K562 (cell line): ENCODE measurements at regions of chr14 and their contacts with region 1.

Region 1: DNA sequence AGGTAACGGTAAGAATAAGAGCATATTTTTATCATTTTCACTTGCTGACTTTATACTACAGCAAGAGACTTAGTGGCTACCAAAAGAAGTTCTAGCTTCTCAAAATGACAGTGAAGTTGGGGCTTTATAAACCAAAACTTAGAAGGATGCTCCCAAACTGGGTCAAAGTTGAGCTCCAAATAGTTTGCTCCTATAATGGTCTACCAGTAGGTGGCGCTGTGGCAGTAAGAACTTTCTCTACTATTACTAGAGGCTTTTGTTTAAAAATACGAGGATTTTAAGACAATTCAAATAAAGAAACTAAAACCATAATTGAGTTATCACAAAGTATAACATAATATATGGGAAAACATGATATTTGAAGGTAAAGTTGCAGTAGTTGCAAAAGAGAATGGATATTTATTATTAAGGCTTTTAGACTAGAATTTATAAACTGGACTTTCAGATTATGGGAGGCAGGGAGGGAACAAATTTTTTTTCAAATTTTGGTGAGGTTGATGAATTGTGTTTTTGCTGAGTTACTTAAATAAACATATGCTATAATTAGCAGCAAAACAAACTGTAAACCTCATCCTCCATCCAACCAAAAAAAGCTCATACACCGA is 75.0 kb downstream of the TGFB3 start:
- DNase-seq: peak; percentile 45 to 73 (median 50)
- ATAC-seq: peak; percentile 70; the same call in 2 of the 3 replicates
- H3K4me3 ChIP-seq: no peak overlapping the region
- H3K27ac ChIP-seq: no peak overlapping the region
- H3K4me1 ChIP-seq: peaks cover 2 to 6% of the 10 kb centered on the region in 2 experiments; a peak in 2 of 5 replicates
- H3K27me3 ChIP-seq: no peaks in the 10 kb centered on the region
- CTCF ChIP-seq: peak; percentile 48 to 69 (median 65); a peak in 5 of 6 replicates
- EP300 ChIP-seq: no peak
- POLR2A ChIP-seq: no peak
- RAD21 ChIP-seq: peak; percentile 58 to 73

Region 2: DNA sequence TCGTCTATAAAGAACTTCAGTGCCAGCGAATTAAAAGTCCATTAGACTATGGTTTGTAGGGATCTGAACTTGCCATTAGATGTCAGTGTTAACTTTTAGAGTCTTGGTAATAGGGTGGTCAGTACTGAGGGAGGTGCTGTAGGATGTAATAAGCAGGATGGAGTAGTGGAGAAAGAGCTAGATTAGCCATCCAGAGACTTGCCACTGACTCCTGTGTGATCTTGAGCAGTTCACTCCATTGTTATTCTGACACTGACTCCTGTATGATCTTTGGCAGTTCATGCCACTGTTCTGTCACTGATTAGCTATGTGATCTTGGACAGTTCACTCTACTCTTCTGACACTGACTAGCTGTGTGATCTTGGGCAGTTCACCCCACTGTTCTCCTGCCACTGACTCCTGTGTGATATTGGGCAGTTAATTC is 112.2 kb before region 1 on chr14:
- CTCF ChIA-PET with region 1: no interaction called
- POLR2A ChIA-PET with region 1: no interaction called
- in situ Hi-C with region 1: no loop called
- intact Hi-C with region 1: loop called (anchors 2 kb)
- DNase-seq: peak in 1 of 4 experiments; percentile 11
- ATAC-seq: peak; percentile 83
- H3K4me3 ChIP-seq: no peak overlapping the region
- H3K27ac ChIP-seq: no peak overlapping the region
- H3K4me1 ChIP-seq: no peaks in the 10 kb centered on the region
- H3K27me3 ChIP-seq: no peaks in the 10 kb centered on the region
- CTCF ChIP-seq: peak; percentile 29 to 71 (median 68); a peak in 4 of 6 replicates
- EP300 ChIP-seq: no peak
- POLR2A ChIP-seq: no peak
- RAD21 ChIP-seq: peak; percentile 56 to 72

Region 3: DNA sequence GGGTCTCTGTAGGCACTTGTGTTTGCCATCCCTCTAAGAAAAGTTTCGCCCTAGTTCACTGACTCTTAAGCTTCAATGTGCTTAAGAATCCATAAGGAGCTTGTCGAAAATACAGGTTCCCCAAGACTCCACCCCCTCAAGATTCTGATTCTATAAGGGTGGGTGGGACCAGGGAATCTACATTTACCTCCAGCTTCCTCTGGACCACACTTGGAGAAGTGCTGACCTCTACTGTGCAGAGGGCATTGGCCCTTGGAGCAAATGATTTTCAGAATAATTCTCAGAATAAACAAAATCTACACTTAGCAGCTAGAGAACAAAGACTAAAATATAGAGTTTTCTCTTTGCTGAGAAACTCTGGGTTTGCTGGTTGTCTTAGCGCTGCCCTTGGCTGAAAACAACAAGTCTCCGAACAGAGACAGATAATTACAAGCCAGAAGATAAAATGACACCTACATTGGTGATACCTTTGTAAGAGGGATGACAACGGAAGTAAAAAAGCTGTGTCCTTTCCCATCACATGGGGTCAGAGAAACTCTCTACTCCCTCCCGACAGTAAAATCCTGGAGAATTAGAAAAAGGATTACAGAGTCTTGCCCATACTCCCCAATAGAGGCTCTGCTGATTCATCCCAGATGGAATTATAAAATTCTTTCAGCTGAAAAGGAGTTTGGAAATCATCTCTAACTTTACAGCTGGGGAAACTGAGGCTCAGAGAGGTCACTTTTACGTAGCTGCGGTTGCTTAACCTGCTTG is 70.2 kb after region 1 on chr14:
- CTCF ChIA-PET with region 1: interaction called, 6 read pairs
- POLR2A ChIA-PET with region 1: interaction called, 6 read pairs
- in situ Hi-C with region 1: loop called (anchors 5 kb)
- intact Hi-C with region 1: loop called (anchors 1 kb)
- DNase-seq: peak in 1 of 4 experiments; percentile 16
- ATAC-seq: no peak
- H3K4me3 ChIP-seq: no peak overlapping the region
- H3K27ac ChIP-seq: no peak overlapping the region
- H3K4me1 ChIP-seq: peaks cover 0 to 13% of the 10 kb centered on the region in 2 experiments; a peak in 3 of 5 replicates
- H3K27me3 ChIP-seq: no peaks in the 10 kb centered on the region
- CTCF ChIP-seq: peak in 1 of 3 experiments; percentile 36; a peak in 2 of 6 replicates
- EP300 ChIP-seq: no peak
- POLR2A ChIP-seq: no peak
- RAD21 ChIP-seq: peak in 1 of 2 experiments; percentile 43; a peak in 2 of 4 replicates